ENCODE measurements at regions of chr9 and their contacts with region 1.

Region 1: DNA sequence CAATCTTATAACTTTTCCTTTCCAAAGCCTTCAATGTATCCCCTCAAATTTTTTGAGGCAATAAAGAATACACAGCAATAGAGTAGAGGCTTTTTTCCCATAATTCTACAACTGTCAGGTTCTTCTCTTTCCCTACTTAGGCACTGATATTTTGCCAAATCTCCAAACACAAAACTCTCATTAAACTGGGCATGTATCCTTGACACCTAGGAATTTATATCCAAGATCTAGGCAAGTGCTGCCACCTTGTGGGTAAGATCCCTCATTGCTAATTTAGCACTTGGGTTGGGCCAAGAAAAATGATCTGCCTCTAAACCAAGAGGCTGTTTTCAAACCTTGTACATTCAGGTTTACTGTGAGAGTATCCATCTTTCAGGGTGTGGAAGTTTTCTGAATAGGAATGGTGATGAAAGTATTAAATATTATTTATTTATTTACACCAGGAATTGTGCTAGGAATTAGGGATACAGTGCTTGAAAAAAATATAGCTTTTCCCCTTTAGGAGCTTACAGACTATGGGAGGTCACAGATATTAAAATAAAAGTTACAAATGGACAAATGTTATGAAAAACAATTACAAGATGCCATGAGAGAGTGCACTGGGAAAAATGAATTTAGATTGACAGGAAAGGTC is 17.6 kb downstream of the TSTD2 start:
- DNase-seq: peak; percentile 60 to 62
- H3K4me3 ChIP-seq: no peak overlapping the region
- H3K27ac ChIP-seq: no peak overlapping the region
- H3K4me1 ChIP-seq: no peaks in the 10 kb centered on the region
- H3K27me3 ChIP-seq: no peaks in the 10 kb centered on the region
- CTCF ChIP-seq: peak; percentile 91

Region 2: GRCh38 chr9:96686548-96687335 is 928.8 kb before region 1 on chr9:
- CTCF ChIA-PET with region 1: no interaction called
- POLR2A ChIA-PET with region 1: no interaction called
- intact Hi-C with region 1: loop called (anchors 1 kb)
- DNase-seq: peak; percentile 53 to 91
- H3K4me3 ChIP-seq: peak overlapping the region; percentile 56
- H3K27ac ChIP-seq: no peak overlapping the region
- H3K4me1 ChIP-seq: peaks cover 3% of the 10 kb centered on the region; the same call in 1 of the 2 replicates
- H3K27me3 ChIP-seq: no peaks in the 10 kb centered on the region
- CTCF ChIP-seq: peak; percentile 66

Region 3: DNA sequence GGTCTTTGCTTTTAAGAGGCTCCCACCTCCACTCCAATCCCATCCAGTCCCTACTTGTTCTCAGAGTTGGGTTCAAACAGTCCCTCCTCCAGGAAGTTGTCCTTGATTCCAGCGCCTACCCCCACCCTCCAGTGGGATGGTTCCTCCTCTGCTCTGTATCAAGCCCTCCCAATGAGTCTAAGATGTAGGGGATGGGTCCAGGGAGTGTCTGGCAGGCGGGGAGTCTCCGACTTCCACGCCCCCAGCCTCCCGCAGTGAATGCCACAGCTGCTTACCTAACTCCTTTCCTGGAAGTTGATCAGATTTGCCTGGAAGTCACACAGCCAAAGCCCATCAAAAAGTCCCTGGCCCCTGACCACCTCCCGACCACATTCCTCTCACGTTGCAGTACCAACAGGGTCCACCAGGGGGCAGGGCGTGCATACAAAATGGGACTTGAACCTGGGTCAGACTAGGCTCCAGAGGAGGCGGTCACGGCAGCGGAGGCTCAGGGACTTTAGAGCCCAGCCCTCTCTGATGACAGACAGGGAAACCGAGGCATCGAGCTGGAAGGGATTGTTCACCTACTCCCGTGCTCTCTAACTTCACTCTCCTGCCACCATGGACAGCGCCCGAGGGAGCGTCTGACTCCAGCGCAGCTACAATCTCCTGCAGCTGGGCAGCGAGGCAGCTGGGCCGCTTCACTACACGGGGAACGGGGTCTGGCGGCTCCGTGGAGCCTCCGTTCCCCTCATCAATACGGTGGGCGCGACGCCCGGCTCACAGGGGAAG is 228.6 kb before region 1 on chr9:
- CTCF ChIA-PET with region 1: interaction called, 5 read pairs
- POLR2A ChIA-PET with region 1: no interaction called
- intact Hi-C with region 1: loop called (anchors 2 kb)
- DNase-seq: peak in 1 of 2 experiments; percentile 71
- H3K4me3 ChIP-seq: no peak overlapping the region
- H3K27ac ChIP-seq: no peak overlapping the region
- H3K4me1 ChIP-seq: no peaks in the 10 kb centered on the region
- H3K27me3 ChIP-seq: no peaks in the 10 kb centered on the region
- CTCF ChIP-seq: peak; percentile 99

Region 4: GRCh38 chr9:97411789-97412625 is 203.5 kb before region 1 on chr9 and contains the start of gene TDRD7:
- CTCF ChIA-PET with region 1: interaction called, 6 read pairs
- POLR2A ChIA-PET with region 1: no interaction called
- intact Hi-C with region 1: loop called (anchors 5 kb)
- DNase-seq: peak; percentile 56 to 88
- H3K4me3 ChIP-seq: peak within 1 kb of the TSS; percentile 89
- H3K27ac ChIP-seq: no peak within 1 kb of the TSS
- H3K4me1 ChIP-seq: peaks cover 8% of the 10 kb centered on the region
- H3K27me3 ChIP-seq: peaks cover 10% of the 10 kb centered on the region; the same call in 1 of the 2 replicates
- CTCF ChIP-seq: peak; percentile 80
- total RNA-seq, gene TDRD7: 11.9 and 14.2 TPM in 2 replicates

Region 5: DNA sequence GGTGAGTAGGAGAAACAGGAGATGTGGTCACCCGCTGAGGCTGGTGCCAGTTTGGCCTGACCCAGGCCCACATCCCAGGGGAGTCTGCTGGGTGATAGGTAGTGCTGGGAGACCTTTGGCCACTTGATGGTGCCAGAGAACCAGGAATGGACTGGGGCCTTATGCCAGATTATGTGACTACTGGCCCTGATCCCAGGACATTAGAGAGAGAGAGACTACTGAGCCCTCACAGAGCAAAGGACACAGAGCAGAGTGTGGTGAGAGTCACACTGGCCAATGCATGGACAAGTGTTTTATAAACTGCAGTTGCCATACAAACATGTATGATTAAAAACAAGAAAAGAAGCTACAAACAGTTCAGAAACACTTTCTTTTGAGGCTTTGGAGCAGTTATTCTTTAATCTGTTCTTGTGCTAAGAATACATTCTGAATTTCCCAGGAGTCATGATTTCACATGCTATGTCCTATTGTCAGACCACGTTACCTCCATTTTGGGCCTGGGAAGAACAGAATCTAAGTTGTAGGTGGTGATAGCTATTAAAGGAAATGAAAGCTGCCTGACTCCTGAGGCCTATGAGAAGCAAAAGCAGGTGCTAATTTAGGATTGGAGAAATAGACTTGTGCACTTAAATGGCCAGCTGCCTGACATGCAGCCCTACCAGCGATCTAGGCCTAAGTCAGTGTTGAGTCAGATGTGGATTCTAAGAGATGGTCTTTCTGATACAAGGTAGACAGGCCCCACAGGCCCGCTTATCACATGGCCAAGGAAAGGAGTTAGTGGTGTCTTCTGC is 146.7 kb before region 1 on chr9:
- CTCF ChIA-PET with region 1: interaction called, 28 read pairs
- POLR2A ChIA-PET with region 1: no interaction called
- intact Hi-C with region 1: loop called (anchors 1 kb)
- DNase-seq: peak in 1 of 2 experiments; percentile 67
- H3K4me3 ChIP-seq: no peak overlapping the region
- H3K27ac ChIP-seq: no peak overlapping the region
- H3K4me1 ChIP-seq: no peaks in the 10 kb centered on the region
- H3K27me3 ChIP-seq: no peaks in the 10 kb centered on the region
- CTCF ChIP-seq: peak; percentile 85

Region 6: DNA sequence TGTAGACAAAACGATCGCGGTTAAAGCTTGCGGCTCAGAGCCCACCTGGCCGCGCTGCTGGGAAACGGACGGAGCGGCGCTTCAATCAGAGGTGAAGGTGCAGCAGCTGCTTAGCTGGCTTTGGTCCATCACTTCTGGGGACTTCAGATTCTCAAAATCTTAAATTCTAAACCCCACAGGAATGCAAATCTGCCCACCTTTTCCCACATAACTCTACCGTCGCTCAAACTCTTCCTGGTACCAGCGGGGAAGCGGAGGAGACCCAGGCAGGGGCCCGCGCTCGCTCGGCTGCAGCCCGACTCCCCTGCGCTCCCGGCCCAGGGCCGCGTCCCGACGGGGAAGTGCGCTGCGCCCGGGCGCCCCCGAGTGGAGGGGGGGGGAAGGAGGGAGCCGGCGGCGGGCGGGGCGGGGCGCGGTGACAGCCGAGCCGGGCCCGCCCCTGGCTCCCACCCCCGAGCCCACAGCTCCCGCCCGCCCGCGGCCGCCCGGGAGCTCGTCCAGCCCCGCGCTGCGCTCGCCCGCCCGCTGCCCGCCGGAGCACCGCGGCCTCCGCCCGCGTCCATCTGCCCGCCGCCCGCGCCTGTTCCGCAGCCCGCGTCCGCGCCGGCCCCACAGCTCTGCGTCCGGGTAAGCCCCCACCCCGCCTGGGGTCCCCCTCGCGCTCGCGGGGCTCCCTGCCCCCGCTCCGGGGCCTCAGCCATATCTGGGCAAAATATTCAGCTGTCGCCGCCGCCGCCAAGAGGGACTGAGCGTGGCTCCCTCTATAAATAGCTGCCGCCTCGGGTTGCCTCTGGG is 114.2 kb before region 1 on chr9 and contains the start of gene TMOD1:
- CTCF ChIA-PET with region 1: interaction called, 14 read pairs
- POLR2A ChIA-PET with region 1: no interaction called
- intact Hi-C with region 1: no loop called
- DNase-seq: peak; percentile 39 to 76
- H3K4me3 ChIP-seq: peak within 1 kb of the TSS; percentile 93
- H3K27ac ChIP-seq: no peak within 1 kb of the TSS
- H3K4me1 ChIP-seq: peaks cover 4% of the 10 kb centered on the region; the same call in 1 of the 2 replicates
- H3K27me3 ChIP-seq: no peaks in the 10 kb centered on the region
- CTCF ChIP-seq: no peak
- total RNA-seq, gene TMOD1: 6.8 and 7.1 TPM in 2 replicates

Region 7: DNA sequence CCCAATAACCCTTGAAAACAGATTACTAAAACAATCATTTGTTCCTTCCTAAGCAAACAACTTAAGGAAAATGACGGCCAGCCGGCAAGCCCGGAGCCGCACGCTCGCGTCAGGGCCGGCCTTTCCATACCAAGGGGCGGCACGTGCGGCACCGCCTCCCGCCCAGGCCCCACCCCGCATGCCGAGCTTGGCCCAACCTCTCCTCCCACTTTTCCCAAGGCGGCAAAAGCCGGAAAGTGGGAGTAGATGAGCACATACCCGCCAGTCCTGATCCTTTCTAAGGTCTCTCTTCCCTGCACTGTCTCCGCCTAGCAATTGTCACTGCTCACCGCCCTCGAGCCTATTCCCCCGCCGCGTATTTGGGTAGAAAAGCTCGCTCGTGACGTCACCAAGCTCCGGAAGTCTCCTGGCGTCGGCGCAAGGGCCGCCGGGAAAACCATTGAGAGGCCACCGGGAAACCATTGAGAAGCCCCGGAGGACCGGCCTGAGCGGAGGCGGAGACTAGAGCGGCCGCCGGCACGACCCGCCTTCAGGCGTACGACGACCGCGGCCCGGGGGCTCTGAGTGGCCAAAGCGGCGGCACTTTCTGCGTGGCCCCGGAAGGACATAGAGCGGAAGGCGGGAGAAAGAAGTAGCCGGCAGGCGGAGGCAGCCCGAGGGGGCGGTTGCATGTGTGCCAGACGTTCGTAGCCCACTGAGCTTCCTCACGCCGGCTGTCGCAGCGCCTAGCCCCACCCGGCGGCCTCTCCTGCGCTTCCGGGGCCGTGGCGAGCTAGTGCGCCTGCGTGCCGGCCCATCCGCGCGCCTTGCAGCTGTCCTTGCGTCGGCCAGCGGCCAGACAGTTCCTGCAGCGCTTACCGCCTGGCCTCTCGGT is 17.7 kb after region 1 on chr9 and contains the starts of genes NCBP1 and TSTD2:
- CTCF ChIA-PET with region 1: interaction called, 10 read pairs
- POLR2A ChIA-PET with region 1: no interaction called
- intact Hi-C with region 1: no loop called
- DNase-seq: peak; percentile 94 to 98
- H3K4me3 ChIP-seq: peak within 1 kb of the TSS; percentile 95
- H3K27ac ChIP-seq: peak within 1 kb of the TSS; percentile 99
- H3K4me1 ChIP-seq: peaks cover 38% of the 10 kb centered on the region
- H3K27me3 ChIP-seq: no peaks in the 10 kb centered on the region
- CTCF ChIP-seq: no peak
- total RNA-seq, gene NCBP1: 38.6 and 40.2 TPM in 2 replicates
- total RNA-seq, gene TSTD2: 17.0 and 19.3 TPM in 2 replicates

Region 8: GRCh38 chr9:98702835-98703380 is 1087.4 kb after region 1 on chr9:
- CTCF ChIA-PET with region 1: no interaction called
- POLR2A ChIA-PET with region 1: no interaction called
- intact Hi-C with region 1: no loop called
- DNase-seq: no peak
- H3K4me3 ChIP-seq: no peak overlapping the region
- H3K27ac ChIP-seq: no peak overlapping the region
- H3K4me1 ChIP-seq: peaks cover 6% of the 10 kb centered on the region
- H3K27me3 ChIP-seq: peaks cover 6% of the 10 kb centered on the region
- CTCF ChIP-seq: no peak